Heart left ventricle (tissue), 16 donors: ENCODE measurements at regions of chr6 and their contacts with region 1.

Region 1: GRCh38 chr6:31958741-31959739 is at the starts of genes NELFE and SKIC2:
- DNase-seq: peak; percentile 98 to 99 (median 99)
- ATAC-seq: peak; percentile 99 to 100 (median 99)
- H3K4me3 ChIP-seq: peak within 1 kb of the TSS; percentile 70 to 99 (median 87)
- H3K27ac ChIP-seq: peak within 1 kb of the TSS; percentile 35 to 95 (median 83)
- H3K4me1 ChIP-seq: peaks cover 0 to 23% (median 18%) of the 10 kb centered on the region in 12 donors
- H3K27me3 ChIP-seq: no peaks in the 10 kb centered on the region
- CTCF ChIP-seq: no peak
- POLR2A ChIP-seq: peak; percentile 18 to 67
- total RNA-seq, gene NELFE: 37.2 to 82.0 (median 46.4) TPM
- total RNA-seq, gene SKIC2: 24.5 to 51.8 (median 36.4) TPM

Region 2: DNA sequence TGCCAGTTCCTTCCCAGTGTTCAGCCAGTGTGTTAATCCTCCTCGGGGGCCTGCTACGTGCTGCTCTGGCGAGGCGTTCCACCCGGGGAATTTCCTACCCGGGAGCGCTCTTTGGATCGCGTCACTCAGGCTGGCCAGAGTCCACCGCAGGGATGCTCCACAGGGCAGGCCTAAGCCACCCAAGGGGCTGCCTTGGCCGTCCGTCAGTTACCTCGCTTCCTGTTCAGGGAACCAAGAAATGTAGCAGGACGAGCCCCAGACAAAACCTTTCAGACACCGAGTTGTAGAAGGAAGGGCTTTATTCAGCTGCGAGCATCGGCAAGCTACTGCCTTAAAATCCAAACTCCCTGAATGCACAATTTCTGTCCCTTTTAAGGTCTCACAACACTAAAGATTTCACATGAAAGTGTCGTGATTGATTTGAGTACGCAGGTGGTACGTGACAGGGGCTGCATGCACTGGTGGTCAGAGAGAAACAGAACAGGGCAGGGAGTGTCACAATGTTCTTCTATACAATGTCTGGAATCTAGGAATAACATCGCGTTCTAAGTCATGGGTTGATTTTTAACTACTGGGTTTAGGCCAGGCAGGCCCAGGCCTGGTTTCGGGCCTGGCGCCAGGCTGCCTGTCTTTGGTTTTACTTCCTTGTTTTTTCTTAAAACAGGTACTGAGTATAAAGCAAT is 772.8 kb before region 1 on chr6:
- intact Hi-C with region 1: no loop called
- DNase-seq: peak; percentile 67 to 88 (median 85)
- ATAC-seq: peak in 3 of 4 donors; percentile 45 to 71 (median 59)
- H3K4me3 ChIP-seq: peak overlapping the region; percentile 2 to 58 (median 44)
- H3K27ac ChIP-seq: peak overlapping the region; percentile 70 to 95 (median 81)
- H3K4me1 ChIP-seq: peaks cover 0 to 21% (median 0%) of the 10 kb centered on the region in 12 donors
- H3K27me3 ChIP-seq: no peaks in the 10 kb centered on the region
- CTCF ChIP-seq: no peak
- POLR2A ChIP-seq: peak in 1 of 2 donors; percentile 58

Region 3: DNA sequence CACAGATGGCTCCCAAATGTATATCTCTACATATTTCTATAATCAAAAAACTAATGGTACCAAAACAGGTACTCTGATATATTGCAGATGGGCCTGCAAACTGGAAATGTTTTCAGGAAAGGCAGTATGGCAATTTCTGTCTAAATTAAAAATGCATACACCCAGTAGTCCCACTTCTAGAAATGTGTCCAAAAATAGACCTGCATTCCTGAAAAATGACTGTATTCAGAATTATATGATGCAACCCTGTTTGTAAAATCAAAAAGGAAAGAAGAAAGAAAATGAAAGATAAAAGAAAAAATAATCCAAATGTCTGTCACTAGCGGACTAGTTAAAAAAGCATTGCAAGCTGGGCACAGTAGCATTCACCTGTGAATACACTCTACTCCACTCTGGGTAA is 474.0 kb before region 1 on chr6:
- intact Hi-C with region 1: no loop called
- DNase-seq: no peak
- ATAC-seq: no peak
- H3K4me3 ChIP-seq: no peak overlapping the region
- H3K27ac ChIP-seq: no peak overlapping the region
- H3K4me1 ChIP-seq: no peaks in the 10 kb centered on the region
- H3K27me3 ChIP-seq: peaks cover 0 to 4% (median 0%) of the 10 kb centered on the region in 9 donors
- CTCF ChIP-seq: no peak
- POLR2A ChIP-seq: no peak

Region 4: DNA sequence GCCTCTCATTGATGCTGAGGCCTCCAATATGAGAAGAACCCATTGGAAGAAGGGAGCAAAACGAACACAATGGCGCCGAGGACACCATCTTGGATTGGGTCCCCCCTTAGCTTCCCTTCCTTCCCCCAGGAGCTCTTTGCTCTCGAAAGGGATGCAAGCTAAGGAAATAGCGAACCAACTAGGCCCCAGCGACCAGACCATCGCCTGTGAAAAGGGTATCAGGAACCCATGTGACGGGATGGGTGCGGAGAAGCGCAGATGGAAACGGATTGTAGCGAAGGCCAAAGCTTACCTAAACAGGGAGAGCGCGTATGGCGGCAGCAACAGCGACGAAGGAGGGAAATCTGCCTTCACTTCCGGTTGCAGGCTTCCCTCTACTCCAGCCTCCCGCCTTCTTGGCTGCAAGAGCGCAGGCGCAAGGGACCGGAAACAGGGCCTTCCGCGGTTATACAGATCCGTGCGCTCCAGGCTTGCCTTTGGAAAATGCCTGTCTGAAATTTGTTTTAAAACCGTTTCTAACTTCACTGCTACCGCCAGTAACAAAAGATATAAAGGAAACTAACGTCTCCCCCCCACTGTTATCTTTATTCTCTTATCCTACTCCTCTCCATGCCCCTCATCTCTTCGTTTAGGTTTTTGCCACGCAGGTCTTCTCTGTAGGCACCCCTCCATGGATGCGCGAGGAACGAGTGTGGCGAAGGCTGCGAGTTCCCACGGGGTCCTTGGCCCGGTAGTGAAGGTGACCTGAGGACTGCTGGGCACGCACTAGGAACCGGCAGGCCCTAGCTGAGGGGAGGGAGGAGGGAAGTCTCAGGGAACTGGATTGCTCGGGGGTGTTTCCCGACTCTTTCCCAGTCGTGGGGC is 417.1 kb before region 1 on chr6 and contains the start of gene DDX39B:
- intact Hi-C with region 1: loop called in 3 of 10 experiments (anchors 10 kb)
- DNase-seq: peak; percentile 96 to 97 (median 97)
- ATAC-seq: peak; percentile 92 to 95 (median 94)
- H3K4me3 ChIP-seq: peak within 1 kb of the TSS; percentile 48 to 95 (median 79)
- H3K27ac ChIP-seq: peak within 1 kb of the TSS; percentile 90 to 99 (median 95)
- H3K4me1 ChIP-seq: peaks cover 3 to 52% (median 35%) of the 10 kb centered on the region in 12 donors
- H3K27me3 ChIP-seq: no peaks in the 10 kb centered on the region
- CTCF ChIP-seq: no peak
- POLR2A ChIP-seq: peak in 1 of 2 donors; percentile 63
- total RNA-seq, gene DDX39B: 122 to 209 (median 164) TPM

Region 5: DNA sequence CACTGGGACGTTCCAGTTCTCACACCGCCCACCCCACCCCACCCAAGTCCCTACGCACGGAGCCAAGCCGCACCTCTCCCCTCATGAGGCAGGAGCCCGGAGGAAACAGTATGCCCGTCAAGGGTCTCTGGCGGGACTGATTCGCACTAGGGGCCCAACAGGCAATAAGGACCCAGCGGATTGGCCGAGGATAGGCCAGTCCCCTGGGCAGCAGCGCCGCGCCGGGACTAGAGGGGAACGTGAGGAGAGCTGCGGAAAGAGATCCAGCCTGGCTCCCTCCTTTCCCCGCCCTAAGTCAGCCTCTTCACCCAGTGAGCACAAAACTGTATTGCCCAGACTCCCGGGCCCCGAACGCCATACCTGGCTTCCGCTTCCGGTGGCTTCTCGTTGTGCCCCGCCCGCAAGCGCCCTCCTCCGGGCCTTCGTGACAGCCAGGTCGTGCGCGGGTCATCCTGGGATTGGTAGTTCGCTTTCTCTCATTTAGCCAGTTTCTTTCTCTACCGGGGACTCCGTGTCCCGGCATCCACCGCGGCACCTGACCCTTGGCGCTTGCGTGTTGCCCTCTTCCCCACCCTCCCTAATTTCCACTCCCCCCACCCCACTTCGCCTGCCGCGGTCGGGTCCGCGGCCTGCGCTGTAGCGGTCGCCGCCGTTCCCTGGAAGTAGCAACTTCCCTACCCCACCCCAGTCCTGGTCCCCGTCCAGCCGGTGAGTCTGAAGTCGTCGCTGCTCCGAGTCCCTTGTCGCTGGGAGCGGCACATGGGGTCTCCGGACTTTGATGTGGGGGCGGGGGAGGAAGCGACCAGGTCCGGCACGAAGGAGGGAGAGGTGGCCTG is 293.3 kb before region 1 on chr6 and contains the start of gene CSNK2B:
- intact Hi-C with region 1: loop called in 1 of 10 experiments (anchors 5 kb)
- DNase-seq: peak; percentile 99
- ATAC-seq: peak; percentile 90 to 94 (median 92)
- H3K4me3 ChIP-seq: peak within 1 kb of the TSS; percentile 64 to 95 (median 83)
- H3K27ac ChIP-seq: peak within 1 kb of the TSS; percentile 83 to 97 (median 95)
- H3K4me1 ChIP-seq: peaks cover 9 to 60% (median 38%) of the 10 kb centered on the region in 12 donors
- H3K27me3 ChIP-seq: no peaks in the 10 kb centered on the region
- CTCF ChIP-seq: peak in 4 of 12 donors; percentile 18 to 41 (median 34)
- POLR2A ChIP-seq: peak in 1 of 2 donors; percentile 56
- total RNA-seq, gene CSNK2B: 111 to 323 (median 116) TPM

Region 6: DNA sequence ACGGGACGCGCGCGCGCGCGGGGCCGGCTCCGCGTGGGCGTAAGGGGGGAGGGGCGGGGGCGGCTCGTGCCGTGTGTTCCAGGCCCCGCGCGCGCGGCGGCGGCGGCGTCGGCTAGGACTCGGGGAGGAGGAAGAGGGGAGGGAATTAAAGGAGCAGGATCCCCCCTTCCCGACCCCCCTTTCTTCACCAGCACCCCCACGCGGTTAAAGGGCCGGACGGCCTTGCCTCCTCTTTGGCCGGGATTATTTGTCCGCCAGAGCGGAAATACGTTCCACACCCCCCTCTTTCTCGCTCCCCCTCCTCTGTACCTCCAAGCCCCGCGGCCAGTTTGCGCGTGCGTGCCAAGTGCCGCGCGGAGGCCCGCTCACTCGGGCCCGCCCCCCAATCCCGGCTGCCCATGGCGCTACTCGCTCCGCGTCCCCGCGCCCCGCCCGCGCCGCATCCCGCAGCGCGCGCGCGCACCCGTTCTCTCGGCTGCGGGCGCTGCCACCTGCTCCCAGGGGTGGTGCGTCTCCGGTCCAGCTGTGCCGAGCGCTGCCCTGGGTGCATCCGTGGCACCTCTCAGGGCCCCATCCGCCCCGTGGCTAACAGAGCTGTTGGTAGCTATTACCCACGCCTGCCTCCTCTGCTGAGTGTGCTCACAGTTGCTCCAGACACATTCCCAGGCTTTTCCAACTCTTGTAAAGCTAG is 56.9 kb before region 1 on chr6 and contains the start of gene ZBTB12:
- intact Hi-C with region 1: loop called in 8 of 10 experiments (anchors 5 to 10 kb)
- DNase-seq: peak; percentile 93 to 94 (median 93)
- ATAC-seq: peak; percentile 60 to 85 (median 82)
- H3K4me3 ChIP-seq: peak within 1 kb of the TSS; percentile 49 to 95 (median 66)
- H3K27ac ChIP-seq: peak within 1 kb of the TSS; percentile 61 to 91 (median 84)
- H3K4me1 ChIP-seq: peaks cover 0 to 41% (median 20%) of the 10 kb centered on the region in 12 donors
- H3K27me3 ChIP-seq: no peaks in the 10 kb centered on the region
- CTCF ChIP-seq: peak in 3 of 12 donors; percentile 9 to 19 (median 15)
- POLR2A ChIP-seq: peak in 1 of 2 donors; percentile 55
- total RNA-seq, gene ZBTB12: 0.99 to 4.3 (median 2.3) TPM

Region 7: GRCh38 chr6:31971993-31972708 is 13.1 kb after region 1 on chr6 and contains the start of gene DXO:
- intact Hi-C with region 1: loop called in 3 of 10 experiments (anchors 1 kb)
- DNase-seq: peak; percentile 96 to 98 (median 97)
- ATAC-seq: peak; percentile 94 to 96 (median 95)
- H3K4me3 ChIP-seq: peak within 1 kb of the TSS; percentile 56 to 87 (median 70)
- H3K27ac ChIP-seq: peak within 1 kb of the TSS; percentile 77 to 98 (median 94)
- H3K4me1 ChIP-seq: peaks cover 0 to 33% (median 24%) of the 10 kb centered on the region in 12 donors
- H3K27me3 ChIP-seq: no peaks in the 10 kb centered on the region
- CTCF ChIP-seq: no peak
- POLR2A ChIP-seq: peak in 1 of 2 donors; percentile 60
- total RNA-seq, gene DXO: 9.4 to 17.8 (median 12.8) TPM

Region 8: GRCh38 chr6:32047850-32048766 is 89.1 kb after region 1 on chr6:
- intact Hi-C with region 1: no loop called
- DNase-seq: peak; percentile 64 to 85 (median 75)
- ATAC-seq: peak; percentile 23 to 63 (median 55)
- H3K4me3 ChIP-seq: peak overlapping the region in 1 of 12 donors; percentile 5
- H3K27ac ChIP-seq: peak overlapping the region in 11 of 12 donors; percentile 3 to 88 (median 74)
- H3K4me1 ChIP-seq: peaks cover 0 to 34% (median 24%) of the 10 kb centered on the region in 12 donors
- H3K27me3 ChIP-seq: no peaks in the 10 kb centered on the region
- CTCF ChIP-seq: peak; percentile 76 to 93 (median 80)
- POLR2A ChIP-seq: no peak

Region 9: GRCh38 chr6:32327103-32327502 is 368.1 kb after region 1 on chr6:
- intact Hi-C with region 1: no loop called
- DNase-seq: no peak
- ATAC-seq: no peak
- H3K4me3 ChIP-seq: no peak overlapping the region
- H3K27ac ChIP-seq: no peak overlapping the region
- H3K4me1 ChIP-seq: peaks cover 0 to 2% (median 0%) of the 10 kb centered on the region in 12 donors
- H3K27me3 ChIP-seq: no peaks in the 10 kb centered on the region
- CTCF ChIP-seq: no peak
- POLR2A ChIP-seq: no peak